GM12878 (cell line): ENCODE measurements at regions of chr12 and their contacts with region 1.

Region 1: GRCh38 chr12:27220057-27220987 is 23.8 kb upstream of the STK38L start:
- DNase-seq: peak; percentile 90
- ATAC-seq: peak; percentile 85
- H3K4me3 ChIP-seq: no peak overlapping the region
- H3K27ac ChIP-seq: peak overlapping the region; percentile 96
- H3K4me1 ChIP-seq: peaks cover 43% of the 10 kb centered on the region
- H3K27me3 ChIP-seq: no peaks in the 10 kb centered on the region
- CTCF ChIP-seq: no peak
- EP300 ChIP-seq: no peak; a peak in 1 of 4 replicates
- POLR2A ChIP-seq: 0 out of 2 replicates have a peak, but pooled peaks have one; percentile 19
- RAD21 ChIP-seq: peak; percentile 3; the same call in 1 of the 2 replicates

Region 2: GRCh38 chr12:27161458-27162228 is 58.7 kb before region 1 on chr12:
- CTCF ChIA-PET with region 1: interaction called, 4 read pairs
- POLR2A ChIA-PET with region 1: interaction called, 3 read pairs
- RAD21 ChIA-PET with region 1: interaction called, 14 read pairs
- SMC1A ChIA-PET with region 1: interaction called, 7 read pairs
- in situ Hi-C with region 1: no loop called
- intact Hi-C with region 1: loop called (anchors 5 kb)
- DNase-seq: peak; percentile 62
- ATAC-seq: peak; percentile 93
- H3K4me3 ChIP-seq: peak overlapping the region; percentile 15; the same call in 1 of the 2 replicates
- H3K27ac ChIP-seq: peak overlapping the region; percentile 64
- H3K4me1 ChIP-seq: peaks cover 3% of the 10 kb centered on the region; the same call in 1 of the 2 replicates
- H3K27me3 ChIP-seq: no peaks in the 10 kb centered on the region
- CTCF ChIP-seq: no peak
- EP300 ChIP-seq: no peak
- POLR2A ChIP-seq: no peak
- RAD21 ChIP-seq: no peak

Region 3: GRCh38 chr12:27185234-27186021 is 34.9 kb before region 1 on chr12:
- CTCF ChIA-PET with region 1: interaction called, 4 read pairs
- POLR2A ChIA-PET with region 1: interaction called, 19 read pairs
- RAD21 ChIA-PET with region 1: interaction called, 36 read pairs
- SMC1A ChIA-PET with region 1: interaction called, 42 read pairs
- in situ Hi-C with region 1: no loop called
- intact Hi-C with region 1: no loop called
- DNase-seq: peak; percentile 85
- ATAC-seq: peak; percentile 98
- H3K4me3 ChIP-seq: no peak overlapping the region
- H3K27ac ChIP-seq: peak overlapping the region; percentile 82
- H3K4me1 ChIP-seq: peaks cover 20% of the 10 kb centered on the region
- H3K27me3 ChIP-seq: no peaks in the 10 kb centered on the region
- CTCF ChIP-seq: no peak
- EP300 ChIP-seq: peak; percentile 24 to 61; a peak in 2 of 4 replicates
- POLR2A ChIP-seq: no peak
- RAD21 ChIP-seq: peak; percentile 23; the same call in 1 of the 2 replicates

Region 4: DNA sequence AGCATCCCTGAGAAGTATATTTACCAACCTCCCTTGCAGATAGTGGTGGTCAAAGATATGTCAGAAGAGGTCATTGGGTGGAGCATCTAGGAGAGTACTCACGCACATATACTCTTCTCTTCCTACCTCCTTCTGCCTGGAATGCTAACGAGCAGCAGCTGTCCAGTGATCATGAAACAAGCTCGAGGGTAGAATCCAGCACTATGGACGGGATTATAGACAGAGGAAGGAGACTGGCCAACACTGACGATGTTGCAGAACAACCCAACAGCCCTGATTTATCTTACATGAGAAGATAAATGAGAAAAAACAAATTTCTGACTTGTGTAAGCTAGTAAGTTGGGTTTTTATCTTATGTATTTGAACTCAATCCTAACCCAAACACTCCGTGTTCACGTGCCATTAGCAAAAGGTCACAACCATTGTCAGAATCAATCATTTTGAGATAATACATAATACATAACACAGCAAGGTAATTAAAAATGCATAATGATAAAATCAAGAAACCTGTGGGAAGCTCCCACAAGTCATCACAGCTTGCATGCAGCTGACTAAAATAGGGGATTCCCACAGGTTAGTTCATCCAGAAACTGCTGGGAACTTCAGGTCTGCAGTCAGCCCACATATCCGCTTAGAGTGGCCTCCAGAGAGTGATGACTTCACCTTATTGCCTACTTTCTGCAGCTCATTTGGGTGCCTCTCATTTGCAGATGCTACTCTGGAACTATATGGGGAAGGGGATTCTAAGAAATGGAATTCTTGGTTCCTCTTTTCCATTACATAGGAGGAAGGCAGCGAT is 12.5 kb before region 1 on chr12:
- CTCF ChIA-PET with region 1: interaction called, 18 read pairs
- POLR2A ChIA-PET with region 1: interaction called, 70 read pairs
- RAD21 ChIA-PET with region 1: interaction called, 73 read pairs
- SMC1A ChIA-PET with region 1: interaction called, 145 read pairs
- in situ Hi-C with region 1: no loop called
- intact Hi-C with region 1: loop called (anchors 1 kb)
- DNase-seq: peak; percentile 93
- ATAC-seq: peak; percentile 92
- H3K4me3 ChIP-seq: peak overlapping the region; percentile 44
- H3K27ac ChIP-seq: peak overlapping the region; percentile 97
- H3K4me1 ChIP-seq: peaks cover 35% of the 10 kb centered on the region
- H3K27me3 ChIP-seq: no peaks in the 10 kb centered on the region
- CTCF ChIP-seq: no peak
- EP300 ChIP-seq: peak; percentile 65 to 78; a peak in 3 of 4 replicates
- POLR2A ChIP-seq: no peak
- RAD21 ChIP-seq: peak; percentile 34; the same call in 1 of the 2 replicates

Region 5: GRCh38 chr12:27252934-27253333 is 32.6 kb after region 1 on chr12:
- CTCF ChIA-PET with region 1: interaction called, 8 read pairs
- POLR2A ChIA-PET with region 1: interaction called, 13 read pairs
- RAD21 ChIA-PET with region 1: interaction called, 18 read pairs
- SMC1A ChIA-PET with region 1: interaction called, 29 read pairs
- in situ Hi-C with region 1: no loop called
- intact Hi-C with region 1: no loop called
- DNase-seq: no peak
- ATAC-seq: peak; percentile 56
- H3K4me3 ChIP-seq: no peak overlapping the region; the same call in 1 of the 2 replicates
- H3K27ac ChIP-seq: peak overlapping the region; percentile 48; the same call in 1 of the 2 replicates
- H3K4me1 ChIP-seq: 0 out of 2 replicates have a peak, but pooled peaks cover 5% of the 10 kb centered on the region
- H3K27me3 ChIP-seq: no peaks in the 10 kb centered on the region
- CTCF ChIP-seq: no peak
- EP300 ChIP-seq: no peak
- POLR2A ChIP-seq: no peak
- RAD21 ChIP-seq: no peak

Region 6: GRCh38 chr12:27284751-27285150 is 64.4 kb after region 1 on chr12:
- CTCF ChIA-PET with region 1: interaction called, 3 read pairs
- POLR2A ChIA-PET with region 1: interaction called, 19 read pairs
- RAD21 ChIA-PET with region 1: interaction called, 26 read pairs
- SMC1A ChIA-PET with region 1: interaction called, 87 read pairs
- in situ Hi-C with region 1: no loop called
- intact Hi-C with region 1: no loop called
- DNase-seq: peak; percentile 89
- ATAC-seq: peak; percentile 67
- H3K4me3 ChIP-seq: no peak overlapping the region
- H3K27ac ChIP-seq: peak overlapping the region; percentile 70; the same call in 1 of the 2 replicates
- H3K4me1 ChIP-seq: peaks cover 28% of the 10 kb centered on the region
- H3K27me3 ChIP-seq: no peaks in the 10 kb centered on the region
- CTCF ChIP-seq: no peak
- EP300 ChIP-seq: peak; percentile 69 to 77; a peak in 3 of 4 replicates
- POLR2A ChIP-seq: no peak
- RAD21 ChIP-seq: no peak